GM18951 (cell line): ENCODE measurements at regions of chr13 and their contacts with region 1.

Region 1: DNA sequence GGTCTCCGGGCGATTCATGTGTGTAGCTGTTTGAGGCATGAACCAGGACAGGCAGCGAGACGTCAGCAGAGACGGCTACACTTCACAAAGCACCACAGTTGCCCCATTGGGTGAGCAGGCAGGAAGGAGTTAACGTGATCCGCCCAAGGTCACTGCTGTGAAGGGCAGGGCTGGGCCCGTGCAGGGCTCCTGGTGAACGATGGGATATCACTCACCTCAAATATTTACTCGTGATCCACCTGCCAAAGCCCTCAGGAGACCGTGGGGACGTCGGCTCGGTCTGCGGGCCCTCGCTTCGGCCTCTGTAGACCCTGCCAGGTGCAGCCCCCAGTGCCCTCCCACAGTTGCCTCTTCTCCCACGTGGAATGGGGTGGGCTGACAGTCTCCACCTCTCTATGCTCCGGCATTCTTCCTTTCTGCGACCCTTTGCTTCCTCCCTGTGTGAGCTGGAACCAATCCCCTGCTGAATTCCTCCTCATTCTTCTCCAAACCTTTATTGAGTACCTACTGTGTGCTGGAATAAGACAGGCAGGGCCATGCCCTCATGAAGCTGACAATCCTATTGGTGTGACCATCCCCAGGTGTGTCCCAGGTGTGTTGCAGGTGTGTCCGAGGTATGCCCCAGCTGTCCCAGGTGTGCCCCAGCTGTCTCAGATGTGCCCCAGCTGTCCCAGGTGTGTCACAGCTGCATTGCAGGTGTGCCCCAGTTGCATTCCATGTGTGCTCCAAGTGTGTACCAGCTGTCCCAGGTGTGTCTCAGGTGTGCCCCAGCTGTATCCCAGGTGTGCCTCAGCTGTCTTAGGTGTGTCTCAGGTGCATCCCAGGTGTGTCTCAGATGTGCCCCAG is 2.0 kb upstream of the GRK1 start:
- POLR2A ChIP-seq: no peak

Region 2: DNA sequence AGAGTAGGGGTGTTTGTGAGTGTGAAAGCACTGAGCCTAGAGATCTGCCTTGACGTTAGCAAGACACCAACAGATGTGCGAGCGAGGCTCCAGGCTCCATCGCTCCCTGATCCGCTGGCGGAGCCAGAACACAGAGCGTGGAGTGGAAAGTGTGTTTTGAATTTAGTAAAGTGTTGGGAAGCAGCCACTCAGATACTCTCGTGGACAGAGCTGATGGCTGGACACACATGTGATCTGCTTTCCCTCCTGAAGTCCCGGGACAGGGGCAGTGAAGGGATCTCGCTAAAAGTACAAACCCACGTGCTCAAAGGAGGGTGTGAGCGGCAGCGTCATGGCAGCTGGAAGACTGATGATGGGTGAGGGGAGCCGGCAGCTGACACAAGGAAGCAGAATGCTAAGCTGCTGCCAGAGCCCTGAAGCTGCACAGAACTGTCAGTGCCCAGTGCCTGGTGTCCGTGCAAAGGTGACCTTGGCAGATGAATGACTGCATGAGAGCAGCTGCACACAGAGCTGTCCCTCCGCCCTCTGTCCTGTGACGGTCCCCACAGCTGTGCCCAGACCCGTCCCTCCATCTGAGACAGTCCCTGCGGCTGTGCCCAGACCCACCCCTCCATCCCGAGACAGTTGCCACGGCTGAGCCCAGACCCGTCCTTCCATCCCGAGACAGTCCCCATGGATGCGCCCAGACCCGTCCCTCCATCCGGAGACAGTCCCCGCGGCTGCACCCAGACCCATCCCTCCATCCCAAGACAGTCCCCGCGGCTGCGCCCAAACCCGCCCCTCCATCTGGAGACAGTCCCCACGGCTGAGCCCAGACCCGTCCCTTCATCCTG is 64.4 kb after region 1 on chr13:
- in situ Hi-C with region 1: loop called (anchors 5 kb)
- POLR2A ChIP-seq: no peak